AG04449 (cell line): ENCODE measurements at regions of chr16 and their contacts with region 1.

Region 1: DNA sequence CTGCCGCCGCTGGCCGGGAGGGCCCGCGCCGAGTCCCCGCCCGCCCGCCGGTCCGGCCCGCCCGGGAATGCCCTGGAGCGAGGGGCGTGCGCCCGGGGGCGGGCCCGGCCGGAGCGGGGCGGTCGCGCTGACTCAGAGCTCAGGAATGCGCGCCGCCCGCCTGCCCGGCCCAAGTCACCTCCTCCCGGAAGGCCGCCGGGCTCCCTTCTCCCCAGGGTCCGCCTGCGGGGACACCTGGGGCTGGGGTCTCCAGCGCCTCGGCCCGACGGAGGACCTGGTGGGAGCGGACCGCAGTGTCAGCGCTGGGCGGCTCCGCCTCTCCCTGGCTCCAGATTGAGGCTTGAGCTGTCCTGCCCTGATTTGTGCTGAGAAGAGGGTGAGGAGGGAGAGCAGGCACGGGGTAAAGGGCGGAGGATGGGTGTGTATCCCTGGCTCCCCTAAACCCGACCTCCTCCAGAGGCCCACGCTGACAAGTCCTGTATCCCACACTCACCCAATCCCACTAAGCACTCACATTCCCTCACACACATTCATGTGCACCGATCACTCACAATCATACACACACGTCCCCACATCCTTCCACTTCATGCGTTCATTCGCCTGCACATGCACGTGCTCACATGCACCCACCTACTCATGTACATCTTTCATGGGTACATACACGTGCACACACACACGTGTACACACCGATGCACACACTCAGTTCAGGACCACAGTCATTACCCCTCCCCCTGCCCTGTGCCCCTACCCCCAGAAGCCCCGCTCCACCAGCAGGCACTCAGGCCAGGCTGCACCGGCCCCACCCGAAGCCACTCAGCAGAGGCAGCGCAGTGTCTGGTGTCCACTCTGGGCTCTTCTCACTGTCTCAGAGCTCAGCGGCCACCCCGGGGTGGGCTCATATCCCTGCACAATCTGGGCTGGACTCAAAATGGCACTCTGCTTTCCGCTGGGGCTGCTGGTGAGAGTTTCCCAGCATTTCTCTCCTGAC is at the start of gene RHBDF1:
- DNase-seq: no peak
- H3K4me3 ChIP-seq: peak within 1 kb of the TSS; percentile 76
- CTCF ChIP-seq: no peak

Region 2: GRCh38 chr16:45454-45853 is 27.4 kb before region 1 on chr16:
- CTCF ChIA-PET with region 1: no interaction called
- POLR2A ChIA-PET with region 1: no interaction called
- DNase-seq: no peak
- H3K4me3 ChIP-seq: no peak overlapping the region
- CTCF ChIP-seq: no peak

Region 3: GRCh38 chr16:84718-85406 is 12.0 kb after region 1 on chr16:
- CTCF ChIA-PET with region 1: interaction called, 728 read pairs
- POLR2A ChIA-PET with region 1: interaction called, 10 read pairs
- DNase-seq: peak; percentile 70
- H3K4me3 ChIP-seq: no peak overlapping the region
- CTCF ChIP-seq: no peak